K562 (cell line): ENCODE measurements at regions of chr20 and their contacts with region 1.

Region 1: GRCh38 chr20:51306503-51307358 is 235.8 kb downstream of the NFATC2 start:
- DNase-seq: peak; percentile 75 to 83 (median 82)
- ATAC-seq: peak; percentile 100
- H3K4me3 ChIP-seq: no peak overlapping the region
- H3K27ac ChIP-seq: no peak overlapping the region
- H3K4me1 ChIP-seq: peaks cover 0 to 5% of the 10 kb centered on the region in 2 experiments; a peak in 1 of 5 replicates
- H3K27me3 ChIP-seq: peaks cover 3 to 11% of the 10 kb centered on the region in 2 experiments; a peak in 3 of 5 replicates
- CTCF ChIP-seq: peak; percentile 88 to 89 (median 89)
- EP300 ChIP-seq: no peak
- POLR2A ChIP-seq: no peak
- RAD21 ChIP-seq: peak; percentile 93 to 96

Region 2: DNA sequence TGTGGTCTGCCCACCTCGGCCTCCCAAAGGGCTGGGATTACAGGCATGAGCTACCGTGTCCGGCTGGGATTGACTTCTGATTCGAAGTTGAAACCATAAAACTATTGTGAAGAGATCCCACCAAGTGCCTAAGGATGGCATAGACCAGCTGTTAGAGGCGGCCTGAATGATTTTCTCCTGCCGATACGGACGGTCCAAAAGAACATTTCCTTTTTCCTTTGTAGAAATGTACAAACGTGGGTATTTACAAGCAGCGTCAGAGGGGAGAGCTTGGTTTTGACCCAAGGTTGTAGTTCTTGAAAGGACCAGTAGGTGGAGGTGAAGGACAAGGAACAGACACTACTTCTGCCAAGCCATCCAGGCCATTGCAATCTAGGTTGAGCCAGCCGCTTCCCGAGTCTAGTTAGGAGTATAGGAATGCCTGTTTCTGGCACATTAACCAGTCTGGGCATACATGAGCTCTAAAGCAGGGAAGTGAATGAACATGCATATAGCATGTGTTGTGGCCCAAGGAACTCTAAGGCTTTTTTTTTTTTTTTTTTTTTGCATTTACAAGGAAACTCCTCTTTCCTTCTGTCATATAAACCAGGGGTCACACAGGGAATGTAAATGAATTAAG is 319.0 kb before region 1 on chr20:
- CTCF ChIA-PET with region 1: interaction called, 13 read pairs
- POLR2A ChIA-PET with region 1: no interaction called
- in situ Hi-C with region 1: loop called (anchors 5 kb)
- intact Hi-C with region 1: no loop called
- DNase-seq: peak; percentile 71 to 85 (median 76)
- ATAC-seq: peak; percentile 97
- H3K4me3 ChIP-seq: no peak overlapping the region
- H3K27ac ChIP-seq: no peak overlapping the region
- H3K4me1 ChIP-seq: 0 out of 5 replicates have a peak, but pooled peaks cover 0 to 2% of the 10 kb centered on the region in 2 experiments
- H3K27me3 ChIP-seq: peaks cover 15 to 28% of the 10 kb centered on the region in 2 experiments; a peak in 4 of 5 replicates
- CTCF ChIP-seq: peak; percentile 80 to 95 (median 90)
- EP300 ChIP-seq: no peak
- POLR2A ChIP-seq: no peak
- RAD21 ChIP-seq: peak; percentile 86 to 93

Region 3: GRCh38 chr20:50992733-50993457 is 313.8 kb before region 1 on chr20:
- CTCF ChIA-PET with region 1: interaction called, 13 read pairs
- POLR2A ChIA-PET with region 1: no interaction called
- in situ Hi-C with region 1: loop called (anchors 5 kb)
- intact Hi-C with region 1: loop called (anchors 1 kb)
- DNase-seq: peak; percentile 82 to 95 (median 93)
- ATAC-seq: peak; percentile 100
- H3K4me3 ChIP-seq: no peak overlapping the region
- H3K27ac ChIP-seq: no peak overlapping the region
- H3K4me1 ChIP-seq: 0 out of 5 replicates have a peak, but pooled peaks cover 0 to 5% of the 10 kb centered on the region in 2 experiments
- H3K27me3 ChIP-seq: peaks cover 14 to 38% of the 10 kb centered on the region in 2 experiments; a peak in 4 of 5 replicates
- CTCF ChIP-seq: peak; percentile 80 to 95 (median 94)
- EP300 ChIP-seq: no peak
- POLR2A ChIP-seq: no peak
- RAD21 ChIP-seq: peak; percentile 86 to 93

Region 4: DNA sequence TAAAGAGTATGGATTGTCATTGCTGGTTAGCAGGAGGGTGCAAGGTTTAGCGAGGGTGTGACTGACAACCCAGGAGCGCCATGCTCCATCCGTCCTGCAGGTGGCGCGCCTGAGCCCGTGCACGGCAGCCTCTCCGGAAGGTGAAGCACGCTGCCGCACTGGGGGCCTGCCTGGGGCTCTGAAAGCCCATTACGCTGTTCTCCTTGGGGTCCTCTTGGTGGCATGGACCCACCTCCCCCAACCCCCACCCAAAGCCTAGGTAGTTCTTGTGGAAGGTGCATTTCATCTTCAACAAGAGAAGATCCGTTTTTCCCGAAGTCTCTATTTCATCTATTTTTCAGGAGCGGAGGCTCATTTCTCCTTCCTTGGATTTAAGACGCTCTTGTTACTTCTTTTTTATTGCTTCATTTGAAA is 86.4 kb before region 1 on chr20:
- CTCF ChIA-PET with region 1: interaction called, 3 read pairs
- POLR2A ChIA-PET with region 1: no interaction called
- in situ Hi-C with region 1: no loop called
- intact Hi-C with region 1: loop called (anchors 2 kb)
- DNase-seq: peak; percentile 44 to 77 (median 74)
- ATAC-seq: peak; percentile 92
- H3K4me3 ChIP-seq: no peak overlapping the region
- H3K27ac ChIP-seq: no peak overlapping the region
- H3K4me1 ChIP-seq: peaks cover 0 to 3% of the 10 kb centered on the region in 2 experiments; a peak in 2 of 5 replicates
- H3K27me3 ChIP-seq: peaks cover 0 to 9% of the 10 kb centered on the region in 2 experiments; a peak in 2 of 5 replicates
- CTCF ChIP-seq: peak; percentile 75 to 86 (median 81)
- EP300 ChIP-seq: no peak
- POLR2A ChIP-seq: no peak
- RAD21 ChIP-seq: peak; percentile 18 to 62; a peak in 3 of 4 replicates